ENCODE measurements at regions of chr15 and their contacts with region 1.

Region 1: DNA sequence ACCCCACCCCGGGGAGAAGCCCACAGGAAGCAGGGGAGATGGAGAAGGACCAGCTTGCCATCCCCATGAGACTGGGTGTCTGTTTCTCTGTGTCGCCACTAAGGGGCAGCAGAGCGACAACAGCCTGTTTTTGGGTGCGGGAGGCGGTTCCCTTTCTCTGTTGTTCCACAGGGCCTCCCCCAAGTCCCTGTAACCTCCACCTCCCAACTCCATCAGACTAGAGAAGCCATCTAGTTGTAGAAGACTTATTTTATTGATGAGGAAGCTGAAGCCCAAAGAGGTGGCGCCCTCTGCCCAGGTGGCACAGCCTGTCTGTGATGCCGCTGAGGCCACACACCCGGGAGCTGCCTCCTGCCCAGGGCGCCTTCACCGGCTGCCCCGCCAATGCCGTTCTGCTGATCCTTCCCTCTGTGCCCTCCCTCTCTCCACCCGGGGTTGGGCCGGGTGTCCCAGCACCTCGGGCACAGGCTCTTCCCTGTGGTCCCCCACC is 3.9 kb upstream of the CCDC9B start:
- DNase-seq: peak; percentile 69
- ATAC-seq: peak; percentile 3
- H3K4me3 ChIP-seq: no peak overlapping the region
- H3K27ac ChIP-seq: peak overlapping the region; percentile 100
- H3K4me1 ChIP-seq: peaks cover 84% of the 10 kb centered on the region
- H3K27me3 ChIP-seq: no peaks in the 10 kb centered on the region
- CTCF ChIP-seq: peak; percentile 89

Region 2: GRCh38 chr15:40238532-40239403 is 105.9 kb before region 1 on chr15 and contains the start of gene PAK6:
- CTCF ChIA-PET with region 1: no interaction called
- POLR2A ChIA-PET with region 1: no interaction called
- intact Hi-C with region 1: no loop called
- DNase-seq: peak; percentile 93
- ATAC-seq: peak; percentile 91
- H3K4me3 ChIP-seq: peak within 1 kb of the TSS; percentile 67
- H3K27ac ChIP-seq: peak within 1 kb of the TSS; percentile 34
- H3K4me1 ChIP-seq: peaks cover 32% of the 10 kb centered on the region
- H3K27me3 ChIP-seq: no peaks in the 10 kb centered on the region
- CTCF ChIP-seq: no peak
- total RNA-seq, gene PAK6: 30.4 TPM in 2 replicates

Region 3: GRCh38 chr15:40405501-40406381 is 61.1 kb after region 1 on chr15 and contains the start of gene IVD:
- CTCF ChIA-PET with region 1: interaction called, 3 read pairs
- POLR2A ChIA-PET with region 1: interaction called, 7 read pairs
- intact Hi-C with region 1: loop called (anchors 5 kb)
- DNase-seq: peak; percentile 98
- ATAC-seq: peak; percentile 98
- H3K4me3 ChIP-seq: peak within 1 kb of the TSS; percentile 92
- H3K27ac ChIP-seq: peak within 1 kb of the TSS; percentile 55
- H3K4me1 ChIP-seq: peaks cover 21% of the 10 kb centered on the region
- H3K27me3 ChIP-seq: no peaks in the 10 kb centered on the region
- CTCF ChIP-seq: no peak
- total RNA-seq, gene IVD: 58.9 and 59.4 TPM in 2 replicates

Region 4: GRCh38 chr15:40421246-40422157 is 76.8 kb after region 1 on chr15:
- CTCF ChIA-PET with region 1: interaction called, 10 read pairs
- POLR2A ChIA-PET with region 1: no interaction called
- intact Hi-C with region 1: loop called (anchors 1 kb)
- DNase-seq: peak; percentile 82
- ATAC-seq: peak; percentile 84
- H3K4me3 ChIP-seq: peak overlapping the region; percentile 36; the same call in 1 of the 2 replicates
- H3K27ac ChIP-seq: peak overlapping the region; percentile 31
- H3K4me1 ChIP-seq: peaks cover 23% of the 10 kb centered on the region
- H3K27me3 ChIP-seq: no peaks in the 10 kb centered on the region
- CTCF ChIP-seq: peak; percentile 94

Region 5: GRCh38 chr15:40440743-40441564 is 96.3 kb after region 1 on chr15 and contains the start of gene BAHD1:
- CTCF ChIA-PET with region 1: no interaction called
- POLR2A ChIA-PET with region 1: no interaction called
- intact Hi-C with region 1: loop called (anchors 5 kb)
- DNase-seq: peak; percentile 95
- ATAC-seq: peak; percentile 82
- H3K4me3 ChIP-seq: peak within 1 kb of the TSS; percentile 86
- H3K27ac ChIP-seq: no peak within 1 kb of the TSS
- H3K4me1 ChIP-seq: peaks cover 39% of the 10 kb centered on the region
- H3K27me3 ChIP-seq: no peaks in the 10 kb centered on the region
- CTCF ChIP-seq: no peak
- total RNA-seq, gene BAHD1: 18.8 and 19.9 TPM in 2 replicates

Region 6: GRCh38 chr15:40506964-40507571 is 162.4 kb after region 1 on chr15:
- CTCF ChIA-PET with region 1: no interaction called
- POLR2A ChIA-PET with region 1: no interaction called
- intact Hi-C with region 1: loop called (anchors 10 kb)
- DNase-seq: peak; percentile 87
- ATAC-seq: peak; percentile 91
- H3K4me3 ChIP-seq: peak overlapping the region; percentile 59
- H3K27ac ChIP-seq: no peak overlapping the region
- H3K4me1 ChIP-seq: peaks cover 13% of the 10 kb centered on the region
- H3K27me3 ChIP-seq: no peaks in the 10 kb centered on the region
- CTCF ChIP-seq: peak; percentile 77

Region 7: DNA sequence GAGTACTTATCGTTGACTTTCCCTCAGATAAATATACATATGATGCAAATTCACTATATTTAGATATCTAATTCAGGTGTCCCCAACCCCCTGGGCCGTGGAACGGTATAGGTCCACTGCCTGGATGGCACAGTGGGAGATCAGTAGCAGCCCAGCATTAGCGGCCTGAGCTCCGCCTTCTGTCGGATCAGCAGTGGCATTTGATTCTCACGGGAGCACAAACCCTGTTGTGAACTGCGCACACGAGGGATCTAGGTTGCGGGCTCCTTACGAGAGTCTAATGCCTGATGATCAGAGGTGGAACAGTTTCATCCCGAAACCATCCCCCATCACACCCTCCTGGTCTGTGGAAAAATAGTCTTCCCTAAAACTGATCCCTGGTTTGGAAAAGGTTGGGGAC is 256.3 kb after region 1 on chr15:
- CTCF ChIA-PET with region 1: no interaction called
- POLR2A ChIA-PET with region 1: no interaction called
- intact Hi-C with region 1: no loop called
- DNase-seq: no peak
- ATAC-seq: no peak
- H3K4me3 ChIP-seq: no peak overlapping the region
- H3K27ac ChIP-seq: no peak overlapping the region
- H3K4me1 ChIP-seq: peaks cover 9% of the 10 kb centered on the region; the same call in 1 of the 2 replicates
- H3K27me3 ChIP-seq: no peaks in the 10 kb centered on the region
- CTCF ChIP-seq: no peak